ENCODE measurements at regions of chr16 and their contacts with region 1.

Region 1: GRCh38 chr16:3880623-3881498 is at the start of gene CREBBP:
- DNase-seq: peak; percentile 65 to 91 (median 74)
- H3K4me3 ChIP-seq: peak within 1 kb of the TSS; percentile 60 to 94 (median 86)
- H3K27ac ChIP-seq: peak within 1 kb of the TSS in 52 of 59 donors; percentile 10 to 91 (median 77)
- H3K27me3 ChIP-seq: no peaks in the 10 kb centered on the region
- CTCF ChIP-seq: peak in 34 of 56 donors; percentile 6 to 58 (median 28)
- total RNA-seq, gene CREBBP: 67.1 to 131 (median 97.4) TPM

Region 2: DNA sequence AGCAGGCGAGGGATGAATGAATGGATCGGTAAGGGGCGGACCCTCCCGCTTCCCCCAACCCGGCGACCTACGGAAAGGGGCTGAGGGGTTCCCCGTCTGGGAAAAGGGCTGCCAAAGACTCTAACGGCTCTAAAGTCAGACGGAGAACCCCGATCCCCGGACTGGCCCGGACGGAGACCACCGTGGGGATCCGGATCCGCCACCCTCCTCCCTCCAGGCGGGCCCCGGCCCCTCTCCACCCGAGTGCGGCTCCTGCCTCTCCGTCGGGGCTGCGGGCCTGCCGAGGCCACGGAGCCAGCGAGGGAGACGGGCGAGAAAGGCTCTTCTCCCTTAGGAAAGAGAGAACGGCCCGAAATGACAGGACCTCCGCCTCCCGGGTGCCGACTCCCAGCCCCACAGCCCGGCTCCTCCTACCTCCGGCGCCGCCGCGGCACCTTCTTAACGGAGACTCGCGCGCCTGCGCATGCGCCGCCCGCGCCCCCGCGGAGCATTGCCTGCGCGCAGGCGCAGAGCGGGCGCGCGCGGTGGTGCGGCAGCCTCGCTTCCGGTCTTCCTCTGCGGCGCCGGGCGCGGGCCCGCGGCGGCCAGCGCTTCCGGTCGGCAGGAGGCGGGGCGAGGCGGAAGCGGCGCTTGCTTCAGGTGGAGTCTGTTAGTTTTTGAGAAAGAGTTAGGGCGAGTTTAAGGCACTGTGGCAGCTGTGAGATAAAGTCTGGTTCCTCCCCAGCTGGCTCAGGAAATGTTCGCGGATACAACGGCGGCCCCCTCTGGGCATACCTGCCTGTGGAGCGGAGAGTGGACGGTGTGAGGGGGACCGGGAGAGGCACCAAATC is 269.5 kb before region 1 on chr16 and contains the start of gene SLX4:
- intact Hi-C with region 1: loop called (anchors 5 kb)
- DNase-seq: peak; percentile 59 to 90 (median 76)
- H3K4me3 ChIP-seq: peak within 1 kb of the TSS; percentile 75 to 100 (median 97)
- H3K27ac ChIP-seq: peak within 1 kb of the TSS in 57 of 59 donors; percentile 43 to 95 (median 85)
- H3K27me3 ChIP-seq: no peaks in the 10 kb centered on the region
- CTCF ChIP-seq: peak in 29 of 56 donors; percentile 3 to 64 (median 32)
- total RNA-seq, gene SLX4: 7.3 to 19.3 (median 12.6) TPM

Region 3: GRCh38 chr16:3690470-3690928 is 190.4 kb before region 1 on chr16:
- intact Hi-C with region 1: loop called (anchors 1 kb)
- DNase-seq: peak; percentile 88 to 97 (median 94)
- H3K4me3 ChIP-seq: peak overlapping the region; percentile 17 to 74 (median 52)
- H3K27ac ChIP-seq: peak overlapping the region in 55 of 59 donors; percentile 7 to 85 (median 65)
- H3K27me3 ChIP-seq: no peaks in the 10 kb centered on the region
- CTCF ChIP-seq: peak; percentile 87 to 99 (median 96)

Region 4: GRCh38 chr16:3717235-3718018 is 163.4 kb before region 1 on chr16 and contains the start of gene TRAP1:
- intact Hi-C with region 1: loop called in 1 of 2 experiments (anchors 5 kb)
- DNase-seq: peak; percentile 84 to 96 (median 90)
- H3K4me3 ChIP-seq: peak within 1 kb of the TSS; percentile 60 to 100 (median 95)
- H3K27ac ChIP-seq: peak within 1 kb of the TSS in 54 of 59 donors; percentile 42 to 93 (median 82)
- H3K27me3 ChIP-seq: no peaks in the 10 kb centered on the region
- CTCF ChIP-seq: peak in 24 of 56 donors; percentile 9 to 60 (median 20)
- total RNA-seq, gene TRAP1: 87.9 to 163 (median 123) TPM

Region 5: DNA sequence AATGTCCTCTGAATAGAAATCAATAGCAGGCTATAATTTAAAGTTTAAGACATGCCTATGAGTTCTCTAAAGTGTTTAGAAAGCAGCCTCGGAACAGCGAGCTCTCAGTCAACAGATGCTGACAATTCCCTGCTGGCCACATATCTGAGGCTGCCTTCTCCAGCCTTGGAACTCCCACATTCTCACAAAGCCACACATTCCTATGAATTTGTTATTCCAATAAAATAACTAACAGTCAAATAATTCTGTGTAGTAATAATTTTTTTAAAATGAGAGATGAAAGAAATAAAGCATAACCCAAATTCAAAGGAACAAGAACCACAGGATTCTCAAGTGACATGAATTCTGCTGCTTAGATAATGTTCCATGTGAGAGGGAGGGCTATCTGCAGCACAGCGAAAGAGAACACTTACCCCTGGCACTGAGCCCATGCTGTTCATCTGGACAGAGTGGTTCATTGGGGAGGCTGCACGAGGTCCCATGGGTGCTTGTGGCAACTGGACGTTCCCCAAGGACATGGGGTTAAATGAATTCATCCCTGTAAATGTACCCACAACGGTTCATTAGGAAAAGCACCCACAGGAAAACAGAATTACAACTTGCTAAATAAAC is 106.6 kb before region 1 on chr16:
- intact Hi-C with region 1: loop called in 1 of 2 experiments (anchors 5 kb)
- DNase-seq: peak in 6 of 10 donors; percentile 44 to 67 (median 58)
- H3K4me3 ChIP-seq: peak overlapping the region in 1 of 59 donors; percentile 3
- H3K27ac ChIP-seq: peak overlapping the region in 50 of 59 donors; percentile 7 to 73 (median 50)
- H3K27me3 ChIP-seq: no peaks in the 10 kb centered on the region
- CTCF ChIP-seq: no peak

Region 6: DNA sequence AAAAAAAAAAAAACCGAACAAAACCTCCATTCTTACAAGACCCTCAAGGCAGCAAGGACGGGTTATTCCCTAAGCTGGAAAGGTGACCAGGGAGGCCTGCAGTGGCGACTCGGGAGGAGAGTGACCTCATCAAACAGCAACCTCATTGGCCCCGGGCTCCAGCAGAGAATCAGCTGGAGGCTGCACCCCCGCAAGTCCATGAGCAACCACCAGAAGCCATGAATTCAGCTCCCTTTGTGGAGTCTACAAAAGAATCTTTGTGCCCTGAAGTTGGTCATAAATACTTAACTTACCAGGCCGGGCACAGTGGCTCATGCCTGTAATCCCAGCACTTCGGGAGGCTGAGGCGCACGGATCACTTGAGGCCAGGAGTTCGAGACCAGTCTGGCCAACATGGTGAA is 80.6 kb after region 1 on chr16:
- intact Hi-C with region 1: loop called in 1 of 2 experiments (anchors 10 kb)
- DNase-seq: peak in 6 of 10 donors; percentile 29 to 60 (median 54)
- H3K4me3 ChIP-seq: peak overlapping the region; percentile 11 to 75 (median 53)
- H3K27ac ChIP-seq: peak overlapping the region in 51 of 59 donors; percentile 1 to 88 (median 66)
- H3K27me3 ChIP-seq: no peaks in the 10 kb centered on the region
- CTCF ChIP-seq: peak in 3 of 56 donors; percentile 5 to 13 (median 9)

Measured in dorsolateral prefrontal cortex (tissue), 120 donors.